ENCODE measurements at regions of chr14 and their contacts with region 1.

Region 1: GRCh38 chr14:20970983-20971704 is 15.9 kb downstream of the RNASE2 start:
- DNase-seq: peak; percentile 75
- H3K4me3 Mint-ChIP-seq: peak overlapping the region; percentile 84
- H3K27ac Mint-ChIP-seq: peak overlapping the region; percentile 54
- H3K4me1 Mint-ChIP-seq: peaks cover 9% of the 10 kb centered on the region
- H3K27me3 Mint-ChIP-seq: peaks cover 41% of the 10 kb centered on the region

Region 2: GRCh38 chr14:20697273-20698017 is 273.7 kb before region 1 on chr14:
- intact Hi-C with region 1: loop called (anchors 2 kb)
- DNase-seq: peak; percentile 44
- H3K4me3 Mint-ChIP-seq: no peak overlapping the region
- H3K27ac Mint-ChIP-seq: no peak overlapping the region
- H3K4me1 Mint-ChIP-seq: peaks cover 15% of the 10 kb centered on the region
- H3K27me3 Mint-ChIP-seq: peaks cover 2% of the 10 kb centered on the region

Region 3: GRCh38 chr14:20830831-20831230 is 140.3 kb before region 1 on chr14:
- intact Hi-C with region 1: no loop called
- DNase-seq: no peak
- H3K4me3 Mint-ChIP-seq: no peak overlapping the region
- H3K27ac Mint-ChIP-seq: no peak overlapping the region
- H3K4me1 Mint-ChIP-seq: peaks cover 3% of the 10 kb centered on the region
- H3K27me3 Mint-ChIP-seq: no peaks in the 10 kb centered on the region

Region 4: DNA sequence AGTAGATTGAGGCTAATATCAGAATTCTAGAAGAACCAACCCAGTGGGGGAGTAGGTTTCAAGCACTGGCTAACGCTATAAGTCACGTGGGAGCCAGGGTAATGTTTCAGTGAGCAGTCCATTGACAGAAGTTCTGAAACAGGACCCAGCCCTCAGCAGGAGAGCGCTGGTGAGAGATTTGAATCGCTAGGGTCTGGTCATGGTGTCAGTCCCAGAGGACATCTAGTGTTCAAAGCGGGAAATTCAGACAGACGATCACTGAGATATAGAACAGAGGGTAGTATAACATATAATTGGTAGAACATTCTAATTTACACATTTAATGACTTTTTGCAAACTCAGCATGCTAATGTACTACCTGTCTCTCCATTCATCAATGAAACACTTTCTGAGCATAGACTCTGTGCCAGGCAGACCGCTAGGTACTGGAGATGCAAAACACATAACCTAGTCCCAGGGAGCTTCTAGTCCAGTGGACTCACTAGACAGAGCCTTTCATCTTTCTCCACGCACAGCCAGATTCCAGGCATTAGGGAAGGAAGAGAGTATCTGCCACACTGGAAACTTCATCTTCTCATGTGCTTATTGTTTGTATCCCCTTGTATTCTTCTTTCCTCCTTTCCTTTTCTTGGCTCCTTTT is 115.4 kb before region 1 on chr14:
- intact Hi-C with region 1: loop called (anchors 1 kb)
- DNase-seq: peak; percentile 31
- H3K4me3 Mint-ChIP-seq: no peak overlapping the region
- H3K27ac Mint-ChIP-seq: no peak overlapping the region
- H3K4me1 Mint-ChIP-seq: peaks cover 4% of the 10 kb centered on the region
- H3K27me3 Mint-ChIP-seq: peaks cover 25% of the 10 kb centered on the region

Region 5: DNA sequence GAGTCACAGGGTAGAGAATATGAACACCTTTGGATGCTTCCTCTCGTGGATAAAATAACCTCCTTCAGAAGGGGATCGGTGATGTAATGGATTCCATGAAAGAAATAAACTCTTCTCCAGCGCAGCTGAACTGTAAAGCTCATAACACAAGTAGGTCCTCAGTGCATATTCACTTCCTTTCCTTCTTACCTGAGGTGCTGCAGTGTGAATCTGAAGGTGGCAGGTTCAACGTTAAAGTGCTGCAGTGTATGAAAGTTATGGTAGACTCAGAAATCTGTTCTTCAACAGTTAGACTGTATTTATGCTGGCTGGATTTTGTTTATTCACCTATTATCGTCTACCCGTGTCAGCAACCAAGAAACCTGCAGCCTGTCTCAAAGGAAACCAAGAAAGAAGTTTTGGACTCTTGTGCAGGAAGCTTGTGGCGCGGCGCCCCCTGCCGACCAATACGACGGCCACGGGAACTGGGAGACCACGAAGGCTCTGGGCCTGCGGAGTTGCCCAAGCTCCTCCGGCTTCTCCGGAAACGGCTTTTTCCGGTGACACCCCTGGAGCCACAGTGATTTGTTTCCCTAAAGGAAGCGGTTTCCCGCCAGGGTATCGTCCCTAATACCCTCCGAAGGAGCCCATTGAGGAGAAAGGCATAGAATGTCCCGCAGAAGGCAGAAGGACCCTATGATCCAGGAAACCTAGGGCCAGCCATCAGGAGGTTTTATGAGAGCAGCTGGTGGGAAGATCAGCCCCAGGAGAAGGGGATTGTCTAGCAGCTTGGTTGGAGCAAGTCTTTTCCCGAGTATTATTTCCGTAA is 97.6 kb before region 1 on chr14:
- intact Hi-C with region 1: loop called (anchors 5 kb)
- DNase-seq: peak; percentile 65
- H3K4me3 Mint-ChIP-seq: no peak overlapping the region
- H3K27ac Mint-ChIP-seq: no peak overlapping the region
- H3K4me1 Mint-ChIP-seq: peaks cover 10% of the 10 kb centered on the region
- H3K27me3 Mint-ChIP-seq: peaks cover 21% of the 10 kb centered on the region

Region 6: GRCh38 chr14:20956376-20956976 is 14.7 kb before region 1 on chr14:
- intact Hi-C with region 1: loop called (anchors 1 kb)
- DNase-seq: no peak
- H3K4me3 Mint-ChIP-seq: no peak overlapping the region
- H3K27ac Mint-ChIP-seq: no peak overlapping the region
- H3K4me1 Mint-ChIP-seq: peaks cover 33% of the 10 kb centered on the region
- H3K27me3 Mint-ChIP-seq: no peaks in the 10 kb centered on the region

Region 7: DNA sequence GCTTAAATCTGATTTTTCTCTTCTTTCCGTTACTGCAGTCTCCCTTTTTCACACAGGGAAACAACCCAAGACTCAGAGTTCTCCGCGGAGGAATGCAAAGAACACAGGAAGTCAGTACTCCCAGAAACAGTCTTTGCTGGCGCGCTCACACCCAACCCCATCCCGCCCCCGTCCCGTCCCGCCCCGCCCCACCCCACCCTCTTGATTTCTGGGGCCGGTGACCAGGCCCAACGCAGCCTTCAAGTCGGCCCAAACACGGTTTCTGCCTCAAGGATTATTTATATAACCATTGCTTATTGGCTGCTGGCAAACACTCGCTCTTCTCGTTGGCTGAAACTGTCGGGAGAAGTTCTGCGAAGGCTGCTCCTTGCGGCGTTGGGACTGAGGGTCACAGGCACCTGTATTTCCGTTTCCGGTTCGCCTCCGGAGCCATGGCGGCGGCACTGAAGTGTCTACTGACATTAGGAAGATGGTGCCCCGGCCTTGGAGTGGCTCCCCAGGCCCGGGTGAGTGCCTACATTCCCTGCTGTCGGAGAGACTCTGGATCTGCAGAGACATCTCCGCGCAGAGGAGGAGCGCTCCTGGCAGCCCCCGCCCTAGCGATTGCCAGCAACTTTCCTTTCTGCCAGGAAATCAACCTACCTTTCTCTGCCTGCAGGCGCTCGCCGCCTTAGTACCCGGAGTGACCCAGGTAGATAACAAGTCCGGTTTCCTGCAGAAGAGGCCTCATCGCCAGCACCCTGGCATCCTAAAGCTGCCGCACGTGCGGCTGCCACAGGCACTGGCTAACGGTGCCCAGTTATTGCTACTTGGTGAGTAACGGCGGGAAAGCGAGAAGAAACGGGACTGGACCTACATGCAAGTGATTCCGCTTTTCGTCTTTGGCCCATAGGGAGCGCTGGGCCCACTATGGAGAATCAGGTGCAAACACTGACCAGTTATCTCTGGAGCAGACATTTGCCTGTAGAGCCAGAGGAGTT is 18.7 kb after region 1 on chr14 and contains the start of gene METTL17:
- intact Hi-C with region 1: loop called (anchors 1 kb)
- DNase-seq: peak; percentile 82
- H3K4me3 Mint-ChIP-seq: peak within 1 kb of the TSS; percentile 94
- H3K27ac Mint-ChIP-seq: peak within 1 kb of the TSS; percentile 84
- H3K4me1 Mint-ChIP-seq: peaks cover 18% of the 10 kb centered on the region
- H3K27me3 Mint-ChIP-seq: no peaks in the 10 kb centered on the region
- total RNA-seq, gene METTL17: 93.7 and 102 TPM in 2 replicates

Measured in activated T-helper 2 cell treated with anti-CD3 and anti-CD28 coated beads, Interferon-gamma antibody, Interleukin-2, Interleukin-4, amounts not matched to agents 10 μg/mL and 5 μg/mL and 100 μg/mL, durations not matched to agents 14 hours and 24 hours and 36 hours (primary cell).